Activated B cell treated with CpG ODN at 0.5 μM for 24 hours (primary cell): ENCODE measurements at regions of chr1 and their contacts with region 1.

Region 1: GRCh38 chr1:55257958-55258357 is 42.8 kb upstream of the USP24 start:
- DNase-seq: peak; percentile 34
- ATAC-seq: peak; percentile 50
- H3K4me3 Mint-ChIP-seq: peak overlapping the region; percentile 57
- H3K27ac Mint-ChIP-seq: peak overlapping the region; percentile 93
- H3K4me1 Mint-ChIP-seq: peaks cover 84% of the 10 kb centered on the region
- H3K27me3 Mint-ChIP-seq: no peaks in the 10 kb centered on the region
- CTCF ChIP-seq: no peak

Region 2: GRCh38 chr1:55203064-55203463 is 54.9 kb before region 1 on chr1:
- CTCF ChIA-PET with region 1: no interaction called
- POLR2A ChIA-PET with region 1: no interaction called
- intact Hi-C with region 1: no loop called
- DNase-seq: no peak
- ATAC-seq: no peak
- H3K4me3 Mint-ChIP-seq: no peak overlapping the region
- H3K27ac Mint-ChIP-seq: no peak overlapping the region
- H3K4me1 Mint-ChIP-seq: peaks cover 64% of the 10 kb centered on the region
- H3K27me3 Mint-ChIP-seq: no peaks in the 10 kb centered on the region
- CTCF ChIP-seq: no peak

Region 3: DNA sequence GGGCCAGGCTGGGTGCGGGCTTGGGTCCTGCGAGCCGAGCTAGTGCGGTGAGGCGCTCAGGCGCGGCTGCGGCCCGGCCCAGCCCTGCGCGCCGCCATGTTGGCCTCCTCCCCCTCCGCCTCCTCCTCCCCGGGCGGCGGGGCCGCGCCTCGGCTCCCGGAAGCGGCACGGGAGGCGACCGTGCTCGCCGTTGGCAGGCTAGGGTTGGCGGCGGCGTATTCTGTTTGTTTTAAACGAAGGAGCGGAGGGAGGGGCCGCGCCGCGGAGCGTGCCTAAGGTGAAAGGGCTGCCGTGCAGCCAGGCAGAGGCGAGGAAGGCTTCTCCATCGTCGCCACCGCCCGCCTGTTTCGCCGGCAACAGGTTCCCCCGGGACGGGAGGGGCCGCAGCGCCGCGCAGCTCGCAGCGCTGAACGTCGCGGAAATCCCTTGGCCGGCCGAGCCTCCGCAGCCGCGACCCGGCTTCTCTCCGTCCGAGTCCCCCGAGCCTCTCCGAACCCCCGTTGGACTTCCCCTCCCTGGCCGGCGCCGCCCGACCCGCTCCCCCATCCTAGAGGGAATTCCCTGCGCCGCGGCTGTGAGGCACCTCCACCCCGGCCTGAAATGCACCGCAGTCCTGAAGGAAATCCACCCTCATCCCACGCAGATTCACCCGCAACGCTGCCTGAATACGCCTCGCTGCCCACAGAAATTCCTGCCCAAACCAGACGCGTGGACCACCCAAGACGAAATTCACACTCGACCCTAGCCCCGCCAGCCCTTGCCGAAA is 42.5 kb before region 1 on chr1 and contains the start of gene USP24:
- CTCF ChIA-PET with region 1: no interaction called
- POLR2A ChIA-PET with region 1: interaction called, 120 read pairs
- intact Hi-C with region 1: loop called (anchors 1 kb)
- DNase-seq: peak; percentile 79
- ATAC-seq: peak; percentile 76
- H3K4me3 Mint-ChIP-seq: peak within 1 kb of the TSS; percentile 92
- H3K27ac Mint-ChIP-seq: peak within 1 kb of the TSS; percentile 97
- H3K4me1 Mint-ChIP-seq: peaks cover 65% of the 10 kb centered on the region
- H3K27me3 Mint-ChIP-seq: no peaks in the 10 kb centered on the region
- CTCF ChIP-seq: no peak
- total RNA-seq, gene USP24: 91.4 and 93.2 TPM in 2 replicates

Region 4: DNA sequence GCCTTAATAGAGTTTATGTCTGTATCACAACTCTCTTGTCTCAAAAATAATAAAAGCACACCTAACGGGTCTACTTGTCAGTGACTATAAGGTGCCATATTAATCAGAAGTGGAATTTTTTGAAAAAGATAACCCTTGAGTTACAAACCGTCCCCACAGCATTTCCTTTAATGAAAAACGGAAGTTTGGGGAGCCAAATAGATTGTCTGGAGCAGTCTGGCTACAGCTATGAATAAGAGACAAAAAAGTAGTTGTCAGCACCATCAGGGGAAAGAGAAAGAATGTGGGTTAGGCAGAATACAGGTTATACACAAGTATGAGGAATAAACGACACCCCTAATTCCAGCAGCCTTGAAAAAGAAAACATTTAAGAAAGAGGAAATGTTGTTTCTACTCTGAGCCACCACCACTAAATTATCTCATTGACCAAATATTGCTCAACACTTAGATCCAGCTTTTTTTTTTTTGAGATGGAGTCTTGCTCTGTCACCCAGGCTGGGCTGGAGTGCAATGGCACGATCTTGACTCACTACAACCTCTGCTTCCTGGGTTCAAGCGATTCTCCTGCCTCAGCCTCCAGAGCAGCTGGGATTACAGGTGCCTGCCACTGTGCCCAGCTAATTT is 13.4 kb before region 1 on chr1:
- CTCF ChIA-PET with region 1: no interaction called
- POLR2A ChIA-PET with region 1: interaction called, 6 read pairs
- intact Hi-C with region 1: loop called (anchors 2 kb)
- DNase-seq: no peak
- ATAC-seq: no peak
- H3K4me3 Mint-ChIP-seq: no peak overlapping the region
- H3K27ac Mint-ChIP-seq: peak overlapping the region; percentile 4
- H3K4me1 Mint-ChIP-seq: peaks cover 11% of the 10 kb centered on the region
- H3K27me3 Mint-ChIP-seq: no peaks in the 10 kb centered on the region
- CTCF ChIP-seq: no peak

Region 5: DNA sequence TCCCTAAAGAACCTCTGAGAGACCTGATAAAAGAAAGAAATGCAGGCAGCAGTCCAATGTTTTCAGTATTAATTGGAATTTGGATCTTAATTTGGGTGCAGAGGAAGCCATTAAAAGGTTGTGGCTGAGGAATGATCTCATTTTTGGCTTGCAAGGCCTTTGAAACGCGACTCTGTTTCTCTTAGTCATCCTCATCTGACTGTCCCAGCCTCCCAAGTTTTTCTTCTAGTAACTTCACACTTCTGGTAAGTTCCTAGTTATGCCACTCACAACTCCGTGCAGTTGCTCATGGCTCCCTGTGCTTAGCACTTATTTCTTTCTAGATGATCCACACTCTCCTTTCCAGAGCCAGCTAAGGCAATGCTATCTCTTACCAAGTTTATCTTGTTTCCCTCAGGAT is 104.6 kb after region 1 on chr1:
- CTCF ChIA-PET with region 1: no interaction called
- POLR2A ChIA-PET with region 1: no interaction called
- intact Hi-C with region 1: no loop called
- DNase-seq: no peak
- ATAC-seq: no peak
- H3K4me3 Mint-ChIP-seq: no peak overlapping the region
- H3K27ac Mint-ChIP-seq: no peak overlapping the region
- H3K4me1 Mint-ChIP-seq: no peaks in the 10 kb centered on the region
- H3K27me3 Mint-ChIP-seq: peaks cover 17% of the 10 kb centered on the region
- CTCF ChIP-seq: no peak